GM12878 (cell line): ENCODE measurements at regions of chr2 and their contacts with region 1.

Region 1: DNA sequence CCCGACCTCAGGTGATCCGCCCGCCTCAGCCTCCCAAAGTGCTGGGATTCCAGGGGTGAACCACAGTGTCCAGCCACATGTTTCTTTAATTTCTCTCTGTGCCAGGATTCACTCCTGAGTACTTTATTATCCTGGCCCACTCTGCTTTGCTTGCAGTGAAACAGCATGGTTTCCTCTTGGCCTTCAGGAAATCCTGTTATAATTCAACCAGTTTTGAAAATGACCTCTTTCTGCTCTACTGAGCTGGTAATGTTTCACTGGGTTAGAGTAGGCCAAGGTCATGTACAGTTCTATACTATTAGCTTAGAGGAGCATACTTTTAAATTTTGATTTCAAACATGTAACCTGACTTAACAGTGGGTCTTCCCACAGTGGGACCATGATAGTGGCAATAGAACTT is 90.6 kb upstream of the PELI1 start:
- DNase-seq: no peak
- ATAC-seq: peak; percentile 45
- H3K4me3 ChIP-seq: no peak overlapping the region
- H3K27ac ChIP-seq: no peak overlapping the region
- H3K4me1 ChIP-seq: peaks cover 3% of the 10 kb centered on the region; the same call in 1 of the 2 replicates
- H3K27me3 ChIP-seq: no peaks in the 10 kb centered on the region
- CTCF ChIP-seq: no peak
- EP300 ChIP-seq: no peak
- POLR2A ChIP-seq: no peak
- RAD21 ChIP-seq: no peak

Region 2: GRCh38 chr2:64222351-64222750 is 12.4 kb before region 1 on chr2:
- CTCF ChIA-PET with region 1: interaction called, 4 read pairs
- POLR2A ChIA-PET with region 1: interaction called, 11 read pairs
- RAD21 ChIA-PET with region 1: interaction called, 5 read pairs
- SMC1A ChIA-PET with region 1: interaction called, 149 read pairs
- in situ Hi-C with region 1: no loop called
- intact Hi-C with region 1: no loop called
- DNase-seq: no peak
- ATAC-seq: no peak
- H3K4me3 ChIP-seq: no peak overlapping the region
- H3K27ac ChIP-seq: no peak overlapping the region; the same call in 1 of the 2 replicates
- H3K4me1 ChIP-seq: peaks cover 14% of the 10 kb centered on the region
- H3K27me3 ChIP-seq: no peaks in the 10 kb centered on the region
- CTCF ChIP-seq: no peak
- EP300 ChIP-seq: no peak
- POLR2A ChIP-seq: no peak
- RAD21 ChIP-seq: no peak

Region 3: DNA sequence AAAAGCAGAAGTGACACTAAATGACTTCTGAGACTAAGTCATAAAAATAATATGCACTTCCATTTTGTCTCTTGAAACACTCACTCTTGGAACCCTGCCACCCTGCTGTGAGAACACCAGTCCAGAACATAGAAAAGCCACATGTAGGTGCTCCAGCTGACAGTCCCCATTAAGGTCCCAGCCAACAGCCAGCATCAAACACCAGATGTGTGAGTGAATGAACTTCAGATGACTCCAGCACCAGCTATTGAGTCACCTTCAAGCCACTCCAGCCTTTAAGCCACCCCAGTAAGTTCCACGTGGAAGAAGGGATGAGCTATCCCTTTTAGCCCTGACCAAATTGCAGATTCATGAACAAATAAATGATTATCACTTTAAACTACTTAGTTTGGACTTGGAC is 187.7 kb after region 1 on chr2:
- CTCF ChIA-PET with region 1: no interaction called
- POLR2A ChIA-PET with region 1: no interaction called
- RAD21 ChIA-PET with region 1: no interaction called
- SMC1A ChIA-PET with region 1: no interaction called
- in situ Hi-C with region 1: no loop called
- intact Hi-C with region 1: no loop called
- DNase-seq: no peak
- ATAC-seq: no peak; the same call in 2 of the 3 replicates
- H3K4me3 ChIP-seq: no peak overlapping the region
- H3K27ac ChIP-seq: no peak overlapping the region
- H3K4me1 ChIP-seq: no peaks in the 10 kb centered on the region
- H3K27me3 ChIP-seq: no peaks in the 10 kb centered on the region
- CTCF ChIP-seq: no peak
- EP300 ChIP-seq: no peak
- POLR2A ChIP-seq: no peak
- RAD21 ChIP-seq: no peak